SK-N-SH (cell line): ENCODE measurements at regions of chr1 and their contacts with region 1.

Region 1: DNA sequence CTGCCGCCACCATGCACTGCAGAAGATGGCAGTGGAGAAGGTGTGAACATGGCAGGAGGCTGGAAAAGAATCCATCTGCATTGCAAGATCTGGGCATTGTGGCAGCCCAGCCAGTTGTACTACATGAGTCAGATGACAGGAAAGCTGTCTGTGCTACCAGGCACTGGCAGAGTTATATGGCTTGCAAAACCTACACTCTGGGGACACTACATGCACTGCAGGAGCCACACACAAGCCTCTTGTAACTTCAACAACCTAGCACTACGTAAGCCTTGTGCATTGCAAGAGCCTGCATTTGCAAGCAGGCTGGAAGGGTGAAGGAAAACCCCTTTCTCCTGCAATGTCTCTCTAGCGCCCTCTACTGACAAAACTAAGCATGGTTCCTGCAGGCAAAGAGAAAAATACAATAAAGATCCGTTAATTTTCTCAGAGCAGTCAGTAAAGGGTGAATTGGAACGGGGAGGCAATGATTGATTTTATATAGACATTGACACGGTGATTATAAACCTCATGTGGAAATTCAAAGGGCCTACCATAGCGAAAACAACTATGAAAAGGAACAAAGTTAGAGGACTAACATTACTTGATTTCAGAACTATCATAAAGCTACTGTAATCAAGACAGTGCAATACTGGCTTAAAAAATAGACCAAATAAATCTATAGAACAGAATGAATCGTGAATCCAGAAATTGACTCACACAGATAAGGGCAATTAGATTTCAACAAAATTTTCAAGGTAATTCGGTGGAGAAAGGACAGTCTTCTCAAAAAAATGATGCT is 26.2 kb upstream of the DYNLT5 start:
- DNase-seq: peak; percentile 45
- H3K4me3 ChIP-seq: peak overlapping the region in 1 of 2 experiments; percentile 14; a peak in 1 of 4 replicates
- H3K27ac ChIP-seq: peak overlapping the region in 1 of 2 experiments; percentile 48; a peak in 2 of 4 replicates
- H3K4me1 ChIP-seq: peaks cover 5 to 14% of the 10 kb centered on the region in 2 experiments; a peak in 2 of 4 replicates
- H3K27me3 ChIP-seq: no peaks in the 10 kb centered on the region
- CTCF ChIP-seq: peak; percentile 98
- EP300 ChIP-seq: no peak
- RAD21 ChIP-seq: peak; percentile 88

Region 2: DNA sequence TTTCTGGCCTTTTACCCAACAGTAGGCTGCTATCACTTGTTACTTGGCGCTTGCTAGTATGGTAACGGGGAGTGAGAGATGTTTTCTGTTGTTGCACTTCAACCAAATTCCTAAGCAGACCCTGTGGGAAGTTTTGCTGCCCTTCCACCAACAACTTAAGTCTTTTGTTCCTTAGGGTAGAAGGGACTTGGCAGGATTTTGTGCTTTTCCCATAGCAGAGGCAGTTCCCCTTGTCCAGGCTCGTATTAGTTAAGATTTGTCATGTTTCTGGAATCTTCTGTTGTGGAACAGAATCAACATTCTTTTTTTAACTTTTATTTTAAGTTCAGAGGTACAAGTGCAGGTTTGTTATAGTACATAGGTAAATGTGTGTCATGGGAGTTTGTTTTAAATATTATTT is 265.3 kb before region 1 on chr1:
- CTCF ChIA-PET with region 1: no interaction called
- POLR2A ChIA-PET with region 1: no interaction called
- DNase-seq: no peak
- H3K4me3 ChIP-seq: no peak overlapping the region
- H3K27ac ChIP-seq: no peak overlapping the region
- H3K4me1 ChIP-seq: peaks cover 3 to 8% of the 10 kb centered on the region in 2 experiments
- H3K27me3 ChIP-seq: no peaks in the 10 kb centered on the region
- CTCF ChIP-seq: no peak
- EP300 ChIP-seq: no peak
- RAD21 ChIP-seq: no peak

Region 3: GRCh38 chr1:66490816-66491215 is 235.3 kb before region 1 on chr1:
- CTCF ChIA-PET with region 1: interaction called, 10 read pairs
- POLR2A ChIA-PET with region 1: no interaction called
- DNase-seq: peak; percentile 39
- H3K4me3 ChIP-seq: peak overlapping the region in 1 of 2 experiments; percentile 33; a peak in 2 of 4 replicates
- H3K27ac ChIP-seq: peak overlapping the region; percentile 95 to 100
- H3K4me1 ChIP-seq: peaks cover 46 to 71% of the 10 kb centered on the region in 2 experiments
- H3K27me3 ChIP-seq: no peaks in the 10 kb centered on the region
- CTCF ChIP-seq: no peak
- EP300 ChIP-seq: peak; percentile 77 to 98
- RAD21 ChIP-seq: peak; percentile 32

Region 4: DNA sequence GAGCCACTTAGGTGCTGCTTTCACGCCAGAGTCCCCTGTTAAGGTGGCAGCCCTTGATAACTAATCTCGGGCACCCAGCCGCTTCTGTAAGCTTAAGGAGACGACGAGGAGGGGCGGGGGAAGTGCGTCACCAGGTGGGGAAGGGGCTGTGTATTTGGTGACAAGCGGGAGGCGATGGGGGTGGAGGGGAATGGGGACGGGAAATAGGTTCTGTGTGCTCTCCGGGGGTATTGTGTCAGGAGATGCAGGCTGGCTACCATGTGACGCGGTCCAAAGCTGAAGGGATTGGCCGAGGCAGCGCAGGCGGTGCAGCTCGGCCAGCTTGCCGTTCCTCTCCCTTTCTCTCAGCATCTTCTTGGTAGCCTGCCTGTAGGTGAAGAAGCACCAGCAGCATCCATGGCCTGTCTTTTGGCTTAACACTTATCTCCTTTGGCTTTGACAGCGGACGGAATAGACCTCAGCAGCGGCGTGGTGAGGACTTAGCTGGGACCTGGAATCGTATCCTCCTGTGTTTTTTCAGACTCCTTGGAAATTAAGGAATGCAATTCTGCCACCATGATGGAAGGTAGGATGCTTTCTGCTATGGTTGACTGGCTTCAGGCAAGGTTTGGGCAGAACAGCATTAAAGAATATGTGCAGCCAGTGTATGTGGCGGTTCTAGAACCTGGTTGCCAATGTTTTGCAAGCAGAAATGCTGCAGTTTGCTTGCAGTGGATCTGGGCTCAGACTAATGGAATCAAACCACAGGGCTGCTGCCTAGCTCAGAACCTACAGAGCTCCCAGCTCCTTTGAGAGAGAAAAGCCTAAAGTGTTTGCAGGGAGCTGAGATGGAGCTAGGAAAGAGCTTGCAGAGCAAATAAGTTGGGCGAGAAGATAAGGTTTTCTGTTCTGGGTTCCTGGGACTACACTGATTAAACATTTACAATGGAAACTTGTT is 192.0 kb before region 1 on chr1 and contains the start of gene SGIP1:
- CTCF ChIA-PET with region 1: interaction called, 12 read pairs
- POLR2A ChIA-PET with region 1: interaction called, 3 read pairs
- DNase-seq: peak; percentile 88
- H3K4me3 ChIP-seq: peak within 1 kb of the TSS; percentile 75 to 88
- H3K27ac ChIP-seq: peak within 1 kb of the TSS; percentile 60 to 86
- H3K4me1 ChIP-seq: peaks cover 3 to 14% of the 10 kb centered on the region in 2 experiments; a peak in 3 of 4 replicates
- H3K27me3 ChIP-seq: no peaks in the 10 kb centered on the region
- CTCF ChIP-seq: no peak
- EP300 ChIP-seq: no peak
- RAD21 ChIP-seq: no peak
- polyA plus RNA-seq, gene SGIP1: 15.5 and 22.1 TPM in 2 replicates

Region 5: GRCh38 chr1:66711420-66711819 is 14.7 kb before region 1 on chr1:
- CTCF ChIA-PET with region 1: interaction called, 30 read pairs
- POLR2A ChIA-PET with region 1: no interaction called
- DNase-seq: peak; percentile 25
- H3K4me3 ChIP-seq: no peak overlapping the region
- H3K27ac ChIP-seq: peak overlapping the region in 1 of 2 experiments; percentile 22; a peak in 1 of 4 replicates
- H3K4me1 ChIP-seq: peaks cover 0 to 5% of the 10 kb centered on the region in 2 experiments; a peak in 2 of 4 replicates
- H3K27me3 ChIP-seq: no peaks in the 10 kb centered on the region
- CTCF ChIP-seq: peak; percentile 54
- EP300 ChIP-seq: no peak
- RAD21 ChIP-seq: peak; percentile 65

Region 6: GRCh38 chr1:66739401-66740157 is 13.5 kb after region 1 on chr1:
- CTCF ChIA-PET with region 1: interaction called, 33 read pairs
- POLR2A ChIA-PET with region 1: no interaction called
- DNase-seq: no peak
- H3K4me3 ChIP-seq: no peak overlapping the region
- H3K27ac ChIP-seq: no peak overlapping the region
- H3K4me1 ChIP-seq: no peaks in the 10 kb centered on the region
- H3K27me3 ChIP-seq: no peaks in the 10 kb centered on the region
- CTCF ChIP-seq: no peak
- EP300 ChIP-seq: no peak
- RAD21 ChIP-seq: no peak